Heart right ventricle (tissue), 16 donors: ENCODE measurements at regions of chr15 and their contacts with region 1.

Region 1: DNA sequence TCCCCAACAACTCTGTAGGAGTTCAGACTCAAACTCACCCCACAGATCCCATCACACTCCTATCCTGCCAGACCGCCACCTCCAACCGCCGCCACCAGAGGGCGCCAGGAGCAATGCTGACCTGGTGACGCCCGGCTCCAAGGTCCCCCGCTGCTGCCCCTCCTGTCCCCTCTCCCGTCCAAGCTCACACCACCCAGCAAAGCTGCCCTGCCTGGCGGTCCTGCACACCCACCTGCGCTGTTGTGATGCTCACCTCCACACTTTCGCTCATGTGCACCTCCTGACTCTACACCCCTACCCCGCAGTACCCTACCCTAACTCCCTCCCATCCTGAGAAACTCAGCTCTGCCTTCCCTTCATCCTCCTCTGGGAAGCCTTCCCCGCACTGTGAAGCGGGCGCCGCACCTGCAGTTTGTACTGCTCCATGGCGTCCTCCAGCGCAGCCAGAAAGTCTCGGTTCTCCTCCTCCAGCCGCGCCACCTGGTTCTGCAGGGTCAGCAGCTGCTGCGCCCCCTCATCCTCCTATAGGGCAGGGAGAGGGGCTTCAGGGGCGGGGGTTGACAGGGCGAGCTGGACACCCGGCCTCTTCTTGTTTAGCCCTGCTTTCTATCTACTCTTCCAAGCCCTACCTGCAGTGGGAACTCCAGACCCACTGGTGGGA is 7.9 kb downstream of the KIF7 start:
- DNase-seq: peak; percentile 70 to 83
- ATAC-seq: peak; percentile 65 to 83 (median 70)
- H3K4me3 ChIP-seq: no peak overlapping the region
- H3K27ac ChIP-seq: no peak overlapping the region
- H3K4me1 ChIP-seq: peaks cover 0 to 12% (median 0%) of the 10 kb centered on the region in 9 donors
- H3K27me3 ChIP-seq: peaks cover 0 to 5% (median 0%) of the 10 kb centered on the region in 7 donors
- CTCF ChIP-seq: peak; percentile 60 to 87 (median 84)

Region 2: DNA sequence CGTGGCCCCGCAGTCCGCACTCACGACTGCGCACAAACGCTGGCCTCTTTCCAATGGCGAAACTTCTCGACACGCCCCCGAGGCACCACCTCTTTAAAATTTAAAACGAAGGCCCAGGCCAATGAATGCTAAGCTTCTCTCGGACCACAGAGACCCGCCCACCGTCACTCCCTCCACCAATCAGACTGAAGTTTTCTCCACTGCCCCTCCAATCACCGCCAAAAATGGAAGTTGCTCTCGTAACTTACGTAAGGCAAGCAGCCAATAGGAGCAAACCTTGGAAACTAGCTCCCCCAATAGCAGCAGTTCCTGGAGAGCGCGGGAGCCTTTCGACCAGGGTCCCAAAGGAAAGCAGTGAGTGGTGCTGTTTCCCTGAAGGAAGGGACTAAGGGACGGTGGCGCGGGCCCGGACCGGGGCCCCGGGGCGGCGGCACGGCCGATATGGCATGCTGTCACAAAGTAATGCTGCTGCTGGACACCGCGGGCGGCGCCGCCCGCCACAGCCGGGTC is 72.1 kb before region 1 on chr15 and contains the start of gene TICRR:
- intact Hi-C with region 1: no loop called
- DNase-seq: peak; percentile 91 to 98
- ATAC-seq: peak; percentile 97 to 100 (median 99)
- H3K4me3 ChIP-seq: peak within 1 kb of the TSS; percentile 54 to 99 (median 76)
- H3K27ac ChIP-seq: peak within 1 kb of the TSS in 1 of 10 donors; percentile 53
- H3K4me1 ChIP-seq: peaks cover 8 to 20% (median 10%) of the 10 kb centered on the region in 9 donors
- H3K27me3 ChIP-seq: no peaks in the 10 kb centered on the region
- CTCF ChIP-seq: peak in 1 of 9 donors; percentile 7
- total RNA-seq, gene TICRR: 0.04 to 0.93 (median 0.15) TPM in 4 of 10 donors, not detected in the others

Region 3: DNA sequence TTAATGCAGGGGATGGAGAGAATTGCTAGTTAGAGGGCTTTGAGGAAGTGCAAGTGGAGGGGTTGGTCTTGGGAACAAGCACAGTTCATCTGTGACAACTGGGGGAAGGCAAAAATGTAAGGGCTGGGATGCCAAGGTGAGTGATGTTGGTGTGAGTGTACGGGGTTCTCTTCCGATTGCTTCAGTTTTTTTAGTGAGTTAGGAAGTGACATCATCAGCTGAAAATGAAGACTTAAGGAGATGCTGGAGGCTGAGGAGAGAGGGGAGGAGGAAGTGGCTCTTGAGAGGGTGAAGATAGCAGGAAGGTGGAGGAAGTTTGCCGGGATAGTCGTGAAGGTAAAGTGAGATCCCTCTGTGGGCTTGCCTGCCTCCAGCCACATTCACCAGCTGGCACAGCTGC is 59.4 kb before region 1 on chr15:
- intact Hi-C with region 1: no loop called
- DNase-seq: no peak
- ATAC-seq: no peak
- H3K4me3 ChIP-seq: no peak overlapping the region
- H3K27ac ChIP-seq: no peak overlapping the region
- H3K4me1 ChIP-seq: no peaks in the 10 kb centered on the region
- H3K27me3 ChIP-seq: peaks cover 0 to 5% (median 0%) of the 10 kb centered on the region in 7 donors
- CTCF ChIP-seq: no peak

Region 4: DNA sequence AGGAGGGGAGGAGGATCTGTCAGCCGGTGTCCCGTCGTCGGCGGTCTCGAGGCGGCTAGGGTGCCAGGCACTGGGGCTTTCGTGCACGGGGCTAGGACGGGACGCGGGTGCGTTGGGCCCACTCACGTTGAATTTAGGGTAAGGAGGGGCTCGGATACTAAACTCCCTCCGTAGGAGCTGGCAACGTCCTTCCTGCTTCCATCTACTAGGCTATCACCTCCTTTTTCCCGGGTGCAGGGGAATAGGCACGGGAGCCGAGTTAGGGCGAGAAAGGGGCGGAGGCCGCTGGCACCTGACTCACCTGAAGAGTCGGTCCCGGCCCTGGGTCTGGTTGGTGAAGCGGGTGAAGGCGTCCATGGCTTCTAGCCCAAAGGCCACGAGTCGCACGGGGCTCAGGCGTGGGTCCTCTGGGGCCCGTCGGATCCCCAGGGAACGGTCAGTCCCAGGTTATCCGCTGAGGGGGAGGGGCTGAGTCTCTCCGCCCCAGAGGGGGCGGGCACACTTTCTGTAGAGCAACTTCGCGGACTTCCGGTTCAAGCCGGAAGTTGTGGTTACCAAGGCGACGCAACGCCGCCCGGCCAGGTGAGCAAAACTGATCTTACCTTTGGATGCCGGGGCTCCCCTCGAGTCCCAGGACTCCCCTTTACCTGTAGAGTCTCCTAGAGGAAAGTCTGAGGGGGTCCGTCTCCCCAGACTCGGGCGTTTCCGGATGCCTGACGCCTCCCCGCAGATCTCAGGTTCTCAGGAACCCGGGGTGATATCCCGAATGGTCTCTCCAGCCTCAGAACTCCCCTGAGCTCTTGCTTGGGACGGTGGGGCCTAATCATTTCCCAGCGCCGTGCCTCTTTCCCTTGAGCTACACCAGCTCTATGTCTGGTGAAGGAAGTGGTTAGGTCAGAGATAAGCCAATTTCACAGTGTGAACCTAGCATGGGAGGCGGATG is 43.2 kb after region 1 on chr15 and contains the starts of genes PEX11A and WDR93:
- intact Hi-C with region 1: loop called in 1 of 10 experiments (anchors 10 kb)
- DNase-seq: peak; percentile 77 to 79
- ATAC-seq: peak; percentile 85 to 98 (median 96)
- H3K4me3 ChIP-seq: peak within 1 kb of the TSS; percentile 59 to 86 (median 70)
- H3K27ac ChIP-seq: peak within 1 kb of the TSS in 8 of 10 donors; percentile 41 to 78 (median 62)
- H3K4me1 ChIP-seq: peaks cover 0 to 16% (median 10%) of the 10 kb centered on the region in 9 donors
- H3K27me3 ChIP-seq: no peaks in the 10 kb centered on the region
- CTCF ChIP-seq: no peak
- total RNA-seq, gene PEX11A: 6.0 to 14.3 (median 9.0) TPM
- total RNA-seq, gene WDR93: 0.15 TPM in 2 of 10 donors, not detected in the others

Region 5: DNA sequence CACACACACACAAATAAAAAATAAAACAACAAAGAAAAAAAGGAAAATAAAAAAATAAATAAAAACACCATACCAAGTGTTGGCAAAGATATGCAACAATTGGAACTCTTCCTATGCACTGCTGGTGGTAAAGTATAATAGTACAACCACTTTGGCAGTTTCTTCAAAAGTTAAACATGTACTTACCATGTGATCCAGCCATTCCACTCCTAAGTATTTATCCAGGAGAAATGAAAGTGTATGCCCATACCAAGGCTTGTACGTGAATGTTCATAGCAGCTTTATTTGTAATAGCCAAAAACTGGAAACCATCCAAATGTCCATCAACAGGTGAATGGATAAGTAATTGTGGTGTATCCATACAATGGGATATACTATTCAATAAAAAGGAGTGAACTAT is 60.3 kb after region 1 on chr15:
- intact Hi-C with region 1: no loop called
- DNase-seq: no peak
- ATAC-seq: no peak
- H3K4me3 ChIP-seq: no peak overlapping the region
- H3K27ac ChIP-seq: no peak overlapping the region
- H3K4me1 ChIP-seq: no peaks in the 10 kb centered on the region
- H3K27me3 ChIP-seq: peaks cover 0 to 6% (median 0%) of the 10 kb centered on the region in 7 donors
- CTCF ChIP-seq: no peak

Region 6: GRCh38 chr15:89732451-89733172 is 85.3 kb after region 1 on chr15:
- intact Hi-C with region 1: loop called in 2 of 10 experiments (anchors 5 to 10 kb)
- DNase-seq: no peak
- ATAC-seq: peak in 2 of 8 donors; percentile 29 to 57
- H3K4me3 ChIP-seq: no peak overlapping the region
- H3K27ac ChIP-seq: no peak overlapping the region
- H3K4me1 ChIP-seq: peaks cover 0 to 6% (median 0%) of the 10 kb centered on the region in 9 donors
- H3K27me3 ChIP-seq: peaks cover 0 to 17% (median 8%) of the 10 kb centered on the region in 7 donors
- CTCF ChIP-seq: no peak

Region 7: GRCh38 chr15:89820666-89821611 is 173.6 kb after region 1 on chr15:
- intact Hi-C with region 1: no loop called
- DNase-seq: no peak
- ATAC-seq: peak in 3 of 8 donors; percentile 41 to 66 (median 42)
- H3K4me3 ChIP-seq: no peak overlapping the region
- H3K27ac ChIP-seq: peak overlapping the region in 2 of 10 donors; percentile 20 to 84
- H3K4me1 ChIP-seq: peaks cover 0 to 57% (median 0%) of the 10 kb centered on the region in 9 donors
- H3K27me3 ChIP-seq: peaks cover 0 to 33% (median 15%) of the 10 kb centered on the region in 7 donors
- CTCF ChIP-seq: no peak